WTC11 (cell line): ENCODE measurements at regions of chr10 and their contacts with region 1.

Region 1: GRCh38 chr10:125060826-125061556 is 99.4 kb downstream of the CTBP2 start:
- DNase-seq: peak; percentile 74
- ATAC-seq: peak; percentile 73
- H3K4me3 Mint-ChIP-seq: no peak overlapping the region
- H3K27ac Mint-ChIP-seq: peak overlapping the region; percentile 88
- H3K4me1 Mint-ChIP-seq: peaks cover 91% of the 10 kb centered on the region
- H3K27me3 Mint-ChIP-seq: no peaks in the 10 kb centered on the region
- CTCF ChIP-seq: peak; percentile 56

Region 2: DNA sequence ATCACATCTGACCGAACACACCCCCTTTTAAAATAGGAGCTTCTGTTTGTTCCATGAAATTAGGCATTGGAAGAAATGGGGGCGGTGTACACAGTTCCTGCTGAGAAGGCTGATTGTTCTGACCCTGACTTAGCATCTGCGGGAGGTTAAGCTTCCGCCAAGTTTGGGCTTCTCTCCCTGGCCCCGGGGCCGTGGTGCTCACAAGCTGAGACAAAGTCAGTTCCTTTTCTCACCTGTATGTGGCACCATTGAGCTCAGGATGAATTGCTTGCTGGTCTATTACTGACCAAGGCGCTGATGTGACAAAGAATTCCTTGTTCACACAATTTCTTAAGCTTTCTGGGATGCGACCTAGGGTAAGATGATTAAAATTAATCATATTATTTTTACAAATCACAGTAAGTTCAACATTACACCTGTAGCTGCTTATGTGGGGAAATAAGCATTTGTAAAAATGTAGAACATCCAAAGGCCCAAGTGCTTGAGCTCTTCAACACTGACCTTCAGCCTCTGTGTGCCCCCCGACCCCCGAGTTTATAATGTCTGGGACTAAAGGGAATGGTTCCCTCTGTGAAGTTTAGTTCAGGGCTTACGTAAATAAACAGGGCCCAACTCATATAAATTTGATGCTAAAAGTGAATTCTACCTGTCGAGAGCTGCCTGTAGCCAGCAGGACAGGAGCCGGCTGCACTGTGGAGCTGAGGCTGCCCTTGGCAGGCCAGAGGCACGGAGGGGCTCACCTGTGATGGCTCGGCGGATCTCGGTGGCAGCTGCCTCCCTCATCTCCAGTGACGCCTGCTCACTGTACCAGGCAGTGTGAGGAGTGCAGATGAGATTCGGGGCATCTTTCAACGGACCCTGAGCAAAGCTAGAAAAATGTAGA is 68.3 kb before region 1 on chr10:
- CTCF ChIA-PET with region 1: interaction called, 14 read pairs
- POLR2A ChIA-PET with region 1: no interaction called
- DNase-seq: peak; percentile 67
- ATAC-seq: peak; percentile 72
- H3K4me3 Mint-ChIP-seq: no peak overlapping the region
- H3K27ac Mint-ChIP-seq: peak overlapping the region; percentile 90
- H3K4me1 Mint-ChIP-seq: no peaks in the 10 kb centered on the region
- H3K27me3 Mint-ChIP-seq: no peaks in the 10 kb centered on the region
- CTCF ChIP-seq: peak; percentile 28; the same call in 1 of the 2 replicates

Region 3: GRCh38 chr10:125000366-125001312 is 60.4 kb before region 1 on chr10:
- CTCF ChIA-PET with region 1: interaction called, 11 read pairs
- POLR2A ChIA-PET with region 1: no interaction called
- DNase-seq: peak; percentile 17
- ATAC-seq: peak; percentile 11
- H3K4me3 Mint-ChIP-seq: no peak overlapping the region
- H3K27ac Mint-ChIP-seq: peak overlapping the region; percentile 36
- H3K4me1 Mint-ChIP-seq: no peaks in the 10 kb centered on the region
- H3K27me3 Mint-ChIP-seq: no peaks in the 10 kb centered on the region
- CTCF ChIP-seq: no peak

Region 4: GRCh38 chr10:125006921-125007426 is 54.0 kb before region 1 on chr10:
- CTCF ChIA-PET with region 1: interaction called, 10 read pairs
- POLR2A ChIA-PET with region 1: interaction called, 4 read pairs
- DNase-seq: no peak
- ATAC-seq: no peak
- H3K4me3 Mint-ChIP-seq: no peak overlapping the region
- H3K27ac Mint-ChIP-seq: peak overlapping the region; percentile 84
- H3K4me1 Mint-ChIP-seq: peaks cover 38% of the 10 kb centered on the region
- H3K27me3 Mint-ChIP-seq: no peaks in the 10 kb centered on the region
- CTCF ChIP-seq: no peak